Psoas muscle (tissue), 8 donors: ENCODE measurements at regions of chr19 and their contacts with region 1.

Region 1: DNA sequence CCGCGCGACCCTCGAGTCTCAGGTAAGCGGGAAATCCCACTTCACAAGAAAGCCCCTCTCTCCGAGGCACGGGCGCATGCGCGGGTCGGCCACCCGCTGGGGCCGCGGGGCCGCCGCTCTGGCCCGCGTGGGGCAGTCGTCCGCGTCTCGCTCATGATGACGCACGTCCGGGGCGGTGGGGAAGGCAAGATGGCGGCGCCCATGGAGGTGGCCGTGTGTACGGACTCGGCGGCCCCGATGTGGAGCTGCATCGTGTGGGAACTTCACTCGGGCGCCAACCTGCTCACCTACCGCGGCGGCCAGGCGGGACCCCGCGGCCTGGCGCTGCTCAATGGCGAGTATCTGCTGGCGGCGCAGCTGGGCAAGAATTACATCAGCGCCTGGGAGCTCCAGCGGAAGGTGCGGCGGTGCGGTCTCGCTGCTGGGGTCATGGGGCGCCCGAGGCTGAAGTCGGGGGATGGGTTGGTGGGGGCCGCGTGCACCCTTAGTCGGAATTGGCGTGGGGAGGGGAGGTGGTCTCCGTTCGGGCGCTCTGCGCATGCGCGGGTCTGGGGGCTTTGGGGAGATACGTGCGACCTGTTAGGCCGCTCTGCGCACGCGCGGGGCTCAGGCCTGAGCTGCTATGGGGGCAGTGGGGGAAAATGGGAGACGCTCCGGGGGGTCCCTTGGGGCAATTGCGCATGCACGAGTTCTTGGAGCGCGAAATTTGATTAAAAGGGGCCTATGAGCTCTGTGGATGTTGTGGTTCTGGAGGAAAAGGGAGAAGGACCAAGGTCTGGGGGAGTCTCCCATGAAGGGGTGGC is at the start of gene WDR18:
- DNase-seq: peak; percentile 95 to 97
- ATAC-seq: peak; percentile 95 to 97 (median 96)
- H3K4me3 ChIP-seq: peak within 1 kb of the TSS; percentile 82
- H3K27ac ChIP-seq: peak within 1 kb of the TSS; percentile 88
- H3K4me1 ChIP-seq: peaks cover 10% of the 10 kb centered on the region
- H3K27me3 ChIP-seq: no peaks in the 10 kb centered on the region
- CTCF ChIP-seq: no peak
- total RNA-seq, gene WDR18: 17.4 to 28.0 (median 20.3) TPM

Region 2: DNA sequence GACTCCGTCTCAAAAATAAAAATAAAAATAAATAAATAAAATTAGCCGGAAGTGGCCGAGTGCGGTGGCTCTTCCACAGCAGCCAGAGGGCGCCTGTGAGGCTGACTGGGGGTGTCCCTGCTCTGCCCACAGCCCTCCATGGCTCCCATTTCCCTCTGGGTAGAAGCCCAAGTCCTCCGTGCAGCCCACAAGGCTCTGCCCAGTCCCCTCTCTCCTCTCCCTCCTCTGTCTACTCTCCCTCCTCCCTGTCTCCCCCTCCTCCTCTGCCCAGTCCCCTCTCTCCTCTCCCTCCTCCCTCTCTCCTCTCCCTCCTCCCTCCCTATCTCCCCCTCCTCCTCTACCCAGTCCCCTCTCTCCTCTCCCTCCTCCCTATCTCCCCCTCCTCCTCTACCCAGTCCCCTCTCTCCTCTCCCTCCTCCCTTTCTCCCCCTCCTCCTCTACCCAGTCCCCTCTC is 213.0 kb before region 1 on chr19:
- intact Hi-C with region 1: loop called (anchors 5 kb)
- DNase-seq: peak in 1 of 2 donors; percentile 72
- ATAC-seq: peak in 3 of 4 donors; percentile 36 to 60 (median 51)
- H3K4me3 ChIP-seq: no peak overlapping the region
- H3K27ac ChIP-seq: no peak overlapping the region
- H3K4me1 ChIP-seq: no peaks in the 10 kb centered on the region
- H3K27me3 ChIP-seq: peaks cover 0 to 5% (median 0%) of the 10 kb centered on the region in 3 donors
- CTCF ChIP-seq: peak; percentile 53

Region 3: DNA sequence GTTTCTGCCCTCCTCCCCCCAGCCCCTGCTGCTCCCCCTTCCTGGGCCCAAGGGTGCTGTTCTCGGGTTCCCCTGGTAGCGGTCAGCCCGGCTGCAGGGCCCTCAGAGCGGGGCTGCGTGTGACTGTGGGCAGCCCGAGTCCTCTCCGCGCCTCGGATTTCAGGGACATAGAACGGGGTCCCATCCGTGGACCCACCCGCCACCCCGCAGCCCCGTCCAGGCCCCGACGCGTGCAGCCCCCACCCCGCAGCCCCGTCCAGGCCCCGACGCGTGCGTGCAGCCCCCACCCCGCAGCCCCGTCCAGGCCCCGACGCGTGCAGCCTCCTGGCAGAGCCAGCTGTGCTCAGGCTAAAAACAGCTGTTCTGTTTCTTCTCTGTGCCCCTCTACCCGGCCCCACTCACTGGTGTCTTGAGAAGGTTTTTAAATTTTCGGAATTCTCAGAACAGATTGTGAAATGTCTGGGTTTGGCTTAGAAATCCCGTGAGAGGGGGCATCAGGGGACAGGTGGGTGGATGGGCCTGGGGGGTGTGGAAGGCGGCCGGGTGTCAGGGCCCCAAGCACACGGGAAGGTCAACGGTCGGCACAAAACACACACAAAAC is 149.1 kb before region 1 on chr19:
- intact Hi-C with region 1: no loop called
- DNase-seq: no peak
- ATAC-seq: peak in 1 of 4 donors; percentile 63
- H3K4me3 ChIP-seq: no peak overlapping the region
- H3K27ac ChIP-seq: no peak overlapping the region
- H3K4me1 ChIP-seq: no peaks in the 10 kb centered on the region
- H3K27me3 ChIP-seq: peaks cover 0 to 78% (median 20%) of the 10 kb centered on the region in 3 donors
- CTCF ChIP-seq: no peak

Region 4: DNA sequence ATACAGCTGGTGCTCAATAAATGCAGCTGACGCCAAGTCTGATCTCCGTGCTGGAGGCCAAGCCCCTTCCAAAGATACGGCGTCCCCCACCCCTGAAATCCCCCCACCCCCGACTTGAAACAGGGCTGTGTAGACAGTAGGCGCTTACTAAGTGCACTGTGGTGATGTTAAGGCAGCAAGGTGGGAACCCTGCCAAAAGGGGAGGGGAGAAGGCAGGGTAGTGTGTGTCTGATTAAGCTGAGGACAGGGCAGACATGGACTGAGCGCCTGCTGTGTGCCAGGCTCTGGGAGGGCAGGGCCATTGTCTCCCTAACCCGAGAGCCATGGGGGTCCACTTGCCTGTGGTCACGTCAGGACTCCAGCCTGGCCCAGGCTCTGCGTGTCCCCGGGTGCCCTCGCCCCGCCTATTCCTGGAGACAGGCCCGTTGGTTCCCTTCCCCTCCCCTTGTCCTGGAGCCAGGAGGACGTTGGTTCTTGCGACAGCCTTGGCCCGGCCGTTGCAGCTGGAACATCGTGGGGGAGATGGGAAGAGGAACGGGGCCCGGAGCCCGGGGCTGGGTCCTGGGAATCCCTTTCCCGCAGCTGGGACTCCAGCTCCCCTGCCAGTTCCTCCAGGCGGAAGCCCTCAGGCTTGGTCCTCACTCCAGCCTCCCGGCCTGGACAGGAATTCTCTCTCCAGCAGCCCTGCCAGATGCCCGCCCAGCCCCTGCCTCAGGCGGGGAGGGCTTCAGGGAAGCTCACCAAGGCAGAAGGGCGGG is 134.0 kb before region 1 on chr19:
- intact Hi-C with region 1: loop called in 1 of 2 experiments (anchors 10 kb)
- DNase-seq: peak; percentile 92 to 96
- ATAC-seq: peak; percentile 76 to 90 (median 86)
- H3K4me3 ChIP-seq: peak overlapping the region; percentile 2
- H3K27ac ChIP-seq: peak overlapping the region; percentile 14
- H3K4me1 ChIP-seq: peaks cover 7% of the 10 kb centered on the region
- H3K27me3 ChIP-seq: peaks cover 0 to 78% (median 16%) of the 10 kb centered on the region in 3 donors
- CTCF ChIP-seq: no peak

Region 5: DNA sequence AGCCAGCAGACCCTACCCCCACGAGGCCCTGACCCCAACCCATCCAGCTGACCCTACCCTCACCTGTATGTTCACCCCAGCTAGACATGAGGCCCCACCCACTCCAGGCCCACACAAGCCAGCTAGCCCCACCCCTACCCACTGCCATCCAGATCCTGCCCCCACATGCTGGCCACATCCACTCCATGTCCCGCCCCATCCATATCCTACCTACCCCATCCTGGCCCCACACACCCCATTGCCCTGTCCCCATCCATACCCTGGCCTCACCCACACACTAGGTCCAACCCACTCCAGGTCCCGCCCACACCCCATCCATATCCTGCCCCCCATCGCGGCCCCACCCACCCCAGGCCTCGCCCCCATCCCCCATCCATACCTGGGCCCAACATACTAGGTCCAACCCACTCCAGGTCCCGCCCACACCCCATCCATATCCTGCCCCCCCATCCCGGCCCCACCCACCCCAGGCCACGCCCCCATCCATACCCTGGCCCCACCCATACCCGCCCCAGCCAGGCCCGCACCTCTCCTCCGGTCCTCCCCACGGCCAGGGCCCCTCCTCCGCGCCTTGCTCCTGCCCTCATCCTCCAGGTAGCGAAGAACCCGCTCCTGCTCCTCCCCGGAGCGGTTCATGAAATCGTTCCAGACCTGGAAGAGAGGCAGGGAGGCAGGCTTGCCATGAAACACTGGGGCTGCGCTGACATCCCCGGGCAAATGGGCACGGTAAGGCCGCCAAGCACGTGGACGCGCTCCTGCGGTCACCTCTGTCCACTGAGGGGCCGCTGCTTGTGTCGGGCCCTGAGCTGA is 83.9 kb before region 1 on chr19:
- intact Hi-C with region 1: no loop called
- DNase-seq: peak; percentile 13 to 49
- ATAC-seq: peak in 3 of 4 donors; percentile 29 to 61 (median 42)
- H3K4me3 ChIP-seq: no peak overlapping the region
- H3K27ac ChIP-seq: no peak overlapping the region
- H3K4me1 ChIP-seq: no peaks in the 10 kb centered on the region
- H3K27me3 ChIP-seq: no peaks in the 10 kb centered on the region
- CTCF ChIP-seq: no peak

Region 6: GRCh38 chr19:925526-926322 is 58.6 kb before region 1 on chr19 and contains the start of gene ARID3A:
- intact Hi-C with region 1: loop called (anchors 1 kb)
- DNase-seq: peak; percentile 82 to 89
- ATAC-seq: peak; percentile 81 to 88 (median 82)
- H3K4me3 ChIP-seq: peak within 1 kb of the TSS; percentile 94
- H3K27ac ChIP-seq: peak within 1 kb of the TSS; percentile 74
- H3K4me1 ChIP-seq: no peaks in the 10 kb centered on the region
- H3K27me3 ChIP-seq: peaks cover 0 to 8% (median 0%) of the 10 kb centered on the region in 3 donors
- CTCF ChIP-seq: no peak
- total RNA-seq, gene ARID3A: 4.2 to 6.7 (median 4.9) TPM

Region 7: GRCh38 chr19:1045247-1045603 is 60.9 kb after region 1 on chr19:
- intact Hi-C with region 1: no loop called
- DNase-seq: peak; percentile 20 to 64
- ATAC-seq: peak in 1 of 4 donors; percentile 10
- H3K4me3 ChIP-seq: no peak overlapping the region
- H3K27ac ChIP-seq: no peak overlapping the region
- H3K4me1 ChIP-seq: peaks cover 22% of the 10 kb centered on the region
- H3K27me3 ChIP-seq: no peaks in the 10 kb centered on the region
- CTCF ChIP-seq: no peak